ENCODE measurements at regions of chr9 and their contacts with region 1.

Region 1: DNA sequence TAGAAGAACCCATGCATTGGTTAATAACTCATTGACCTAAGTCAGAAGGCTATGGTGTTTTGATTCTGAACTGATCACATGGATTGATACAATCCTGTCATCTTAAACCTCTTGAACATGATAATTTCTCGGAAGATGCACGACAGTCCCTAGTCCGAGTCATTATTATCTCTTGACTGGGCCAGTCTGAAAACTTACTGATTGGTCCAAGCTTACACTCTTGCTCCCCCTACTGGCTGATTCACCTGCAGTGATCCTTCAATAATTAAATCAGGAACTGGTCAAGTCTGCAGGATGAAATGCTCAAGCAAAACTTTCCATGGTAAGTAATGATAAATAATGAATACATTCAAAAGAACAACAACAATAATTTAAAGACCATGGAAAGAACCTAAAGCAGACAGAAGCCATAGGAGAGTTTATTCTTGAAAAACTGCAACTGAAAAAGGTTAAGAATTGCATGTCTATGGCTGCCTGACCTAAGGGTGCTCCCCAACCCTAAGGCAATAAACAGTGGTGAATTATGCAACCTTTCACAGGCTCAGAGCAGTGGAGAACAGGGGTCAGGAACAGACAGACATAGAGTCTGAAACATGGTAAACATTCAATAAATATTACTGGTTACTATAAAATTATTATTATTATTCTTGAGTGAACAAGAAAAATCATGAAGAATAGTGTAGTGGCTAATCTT is 79.3 kb downstream of the BRINP1 start:
- DNase-seq: peak in 1 of 2 donors; percentile 16
- ATAC-seq: no peak
- H3K4me3 ChIP-seq: no peak overlapping the region
- H3K4me3 Mint-ChIP-seq: no peak overlapping the region
- H3K27ac ChIP-seq: no peak overlapping the region
- H3K27ac Mint-ChIP-seq: no peak overlapping the region
- H3K4me1 ChIP-seq: no peaks in the 10 kb centered on the region
- H3K4me1 Mint-ChIP-seq: no peaks in the 10 kb centered on the region
- H3K27me3 ChIP-seq: no peaks in the 10 kb centered on the region
- H3K27me3 Mint-ChIP-seq: no peaks in the 10 kb centered on the region
- CTCF ChIP-seq: peak; percentile 14

Region 2: DNA sequence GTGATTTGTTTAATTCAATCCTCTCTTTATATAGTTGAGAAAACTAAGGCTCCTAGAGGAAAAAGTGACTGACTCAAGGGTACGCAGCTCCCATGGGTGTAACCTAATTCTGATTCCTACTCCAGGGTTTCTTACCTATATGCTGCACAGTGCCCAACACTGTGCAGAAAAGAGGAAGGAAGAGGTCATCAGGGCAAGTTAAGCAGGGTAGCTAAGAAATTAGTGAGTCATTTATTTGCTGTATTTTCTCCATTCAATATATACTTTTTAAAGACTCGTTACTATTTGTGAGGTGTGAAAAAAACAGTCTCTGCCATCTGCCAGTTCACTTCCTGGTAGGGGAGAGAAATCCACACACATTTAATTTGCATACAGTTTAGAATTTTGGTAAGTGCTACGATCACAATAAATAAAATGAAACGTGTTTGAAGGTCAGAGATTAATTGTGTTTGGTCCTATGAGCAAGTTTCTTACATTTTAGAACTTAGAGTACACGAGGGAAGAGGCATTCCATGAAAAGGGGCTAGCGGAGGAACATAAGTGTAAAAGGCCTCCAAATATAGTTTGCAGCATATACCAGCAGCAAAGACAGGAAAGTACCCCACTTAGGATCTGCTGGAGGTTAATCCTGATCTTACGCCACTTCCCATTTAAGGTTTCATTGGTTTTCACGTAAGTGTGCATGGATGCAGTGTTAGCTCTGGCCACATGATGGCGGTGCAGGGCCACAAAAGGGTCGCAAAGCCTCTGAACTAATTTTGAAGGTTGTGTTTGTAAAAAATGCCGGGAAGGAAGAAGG is 1645.6 kb before region 1 on chr9:
- intact Hi-C with region 1: loop called (anchors 2 kb)
- DNase-seq: peak; percentile 35 to 63
- ATAC-seq: peak; percentile 55 to 85 (median 83)
- H3K4me3 ChIP-seq: no peak overlapping the region
- H3K4me3 Mint-ChIP-seq: peak overlapping the region; percentile 67
- H3K27ac ChIP-seq: no peak overlapping the region
- H3K27ac Mint-ChIP-seq: peak overlapping the region; percentile 6 to 18
- H3K4me1 ChIP-seq: peaks cover 3% of the 10 kb centered on the region
- H3K4me1 Mint-ChIP-seq: peaks cover 11 to 16% of the 10 kb centered on the region in 2 donors
- H3K27me3 ChIP-seq: no peaks in the 10 kb centered on the region
- H3K27me3 Mint-ChIP-seq: peaks cover 11 to 12% of the 10 kb centered on the region in 2 donors
- CTCF ChIP-seq: peak; percentile 76

Region 3: GRCh38 chr9:117782931-117783788 is 1506.7 kb before region 1 on chr9:
- intact Hi-C with region 1: loop called (anchors 5 kb)
- DNase-seq: peak; percentile 37 to 78
- ATAC-seq: peak; percentile 70 to 78 (median 75)
- H3K4me3 ChIP-seq: peak overlapping the region; percentile 21
- H3K4me3 Mint-ChIP-seq: no peak overlapping the region
- H3K27ac ChIP-seq: peak overlapping the region; percentile 59
- H3K27ac Mint-ChIP-seq: no peak overlapping the region
- H3K4me1 ChIP-seq: peaks cover 10% of the 10 kb centered on the region
- H3K4me1 Mint-ChIP-seq: no peaks in the 10 kb centered on the region
- H3K27me3 ChIP-seq: no peaks in the 10 kb centered on the region
- H3K27me3 Mint-ChIP-seq: peaks cover 0 to 6% of the 10 kb centered on the region in 2 donors
- CTCF ChIP-seq: peak; percentile 73